PC-3 (cell line): ENCODE measurements at regions of chr7 and their contacts with region 1.

Region 1: GRCh38 chr7:73842247-73842895 is at the start of gene METTL27:
- DNase-seq: peak; percentile 91
- ATAC-seq: peak; percentile 94
- H3K4me3 ChIP-seq: peak within 1 kb of the TSS; percentile 92
- H3K27ac ChIP-seq: 0 out of 2 replicates have a peak within 1 kb of the TSS, but pooled peaks have one; percentile 13
- H3K4me1 ChIP-seq: peaks cover 13% of the 10 kb centered on the region; the same call in 1 of the 2 replicates
- H3K27me3 ChIP-seq: no peaks in the 10 kb centered on the region
- CTCF ChIP-seq: no peak
- total RNA-seq, gene METTL27: 0.35 and 3.3 TPM in 2 replicates

Region 2: DNA sequence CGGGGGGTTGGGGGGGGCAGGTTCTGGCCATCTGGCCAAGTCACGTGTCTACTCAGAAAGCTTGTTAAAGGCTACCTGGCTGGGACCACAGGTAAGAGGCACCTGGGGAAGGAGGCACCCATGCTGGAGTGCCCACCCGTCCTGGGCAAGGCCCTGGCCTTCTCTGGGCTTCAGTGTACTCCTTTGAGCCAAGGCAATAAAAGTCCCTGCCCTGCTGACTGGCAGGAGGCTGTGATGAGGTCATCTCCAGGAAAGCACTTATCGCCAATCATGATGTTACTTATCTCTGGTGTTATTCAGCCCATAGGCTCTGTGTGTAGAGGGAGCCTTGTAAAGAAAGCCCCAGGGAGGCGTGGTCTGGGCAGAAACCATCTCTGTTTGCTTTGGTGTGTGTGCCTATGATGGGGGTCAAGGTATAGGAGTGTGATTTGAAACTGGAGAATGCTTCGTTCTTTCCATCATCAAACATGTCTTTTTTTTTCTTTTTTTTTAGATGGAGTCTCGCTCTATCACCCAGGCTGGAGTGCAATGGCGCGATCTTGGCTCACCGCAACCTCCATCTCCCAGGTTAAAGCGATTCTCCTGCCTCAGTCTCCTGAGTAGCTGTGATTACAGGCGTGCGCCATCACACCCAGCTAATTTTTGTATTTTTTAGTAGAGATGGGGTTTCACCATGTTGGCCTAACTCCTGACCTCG is 14.1 kb before region 1 on chr7:
- CTCF ChIA-PET with region 1: interaction called, 4 read pairs
- POLR2A ChIA-PET with region 1: interaction called, 64 read pairs
- intact Hi-C with region 1: no loop called
- DNase-seq: peak; percentile 92
- ATAC-seq: peak; percentile 44
- H3K4me3 ChIP-seq: 0 out of 2 replicates have a peak overlapping the region, but pooled peaks have one; percentile 99
- H3K27ac ChIP-seq: peak overlapping the region; percentile 96
- H3K4me1 ChIP-seq: peaks cover 59% of the 10 kb centered on the region
- H3K27me3 ChIP-seq: no peaks in the 10 kb centered on the region
- CTCF ChIP-seq: no peak